Posterior vena cava (tissue), 2 donors: ENCODE measurements at regions of chr4 and their contacts with region 1.

Region 1: GRCh38 chr4:76748649-76749048 is 149.3 kb downstream of the SOWAHB start:
- DNase-seq: no peak

Region 2: GRCh38 chr4:75327804-75328512 is 1420.7 kb before region 1 on chr4:
- intact Hi-C with region 1: no loop called
- DNase-seq: peak; percentile 82

Region 3: DNA sequence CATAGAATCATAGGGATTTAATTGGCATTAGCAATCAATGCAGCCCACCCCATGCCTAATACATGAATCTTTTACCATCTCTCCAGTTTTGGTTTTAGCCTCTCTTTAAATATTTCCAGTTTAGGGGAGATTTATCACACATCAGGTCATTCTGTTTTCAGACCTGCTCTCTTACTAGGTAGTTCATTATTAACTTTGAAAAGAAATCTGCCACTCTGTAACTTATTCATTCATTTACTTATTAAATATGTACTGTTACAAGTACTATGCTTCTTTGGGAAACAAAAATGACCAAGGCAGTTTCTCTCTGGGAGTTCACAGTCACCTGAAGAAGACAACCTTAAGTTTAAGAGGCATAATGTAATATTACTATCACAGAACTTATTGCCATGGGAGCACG is 962.1 kb before region 1 on chr4:
- intact Hi-C with region 1: no loop called
- DNase-seq: no peak

Region 4: DNA sequence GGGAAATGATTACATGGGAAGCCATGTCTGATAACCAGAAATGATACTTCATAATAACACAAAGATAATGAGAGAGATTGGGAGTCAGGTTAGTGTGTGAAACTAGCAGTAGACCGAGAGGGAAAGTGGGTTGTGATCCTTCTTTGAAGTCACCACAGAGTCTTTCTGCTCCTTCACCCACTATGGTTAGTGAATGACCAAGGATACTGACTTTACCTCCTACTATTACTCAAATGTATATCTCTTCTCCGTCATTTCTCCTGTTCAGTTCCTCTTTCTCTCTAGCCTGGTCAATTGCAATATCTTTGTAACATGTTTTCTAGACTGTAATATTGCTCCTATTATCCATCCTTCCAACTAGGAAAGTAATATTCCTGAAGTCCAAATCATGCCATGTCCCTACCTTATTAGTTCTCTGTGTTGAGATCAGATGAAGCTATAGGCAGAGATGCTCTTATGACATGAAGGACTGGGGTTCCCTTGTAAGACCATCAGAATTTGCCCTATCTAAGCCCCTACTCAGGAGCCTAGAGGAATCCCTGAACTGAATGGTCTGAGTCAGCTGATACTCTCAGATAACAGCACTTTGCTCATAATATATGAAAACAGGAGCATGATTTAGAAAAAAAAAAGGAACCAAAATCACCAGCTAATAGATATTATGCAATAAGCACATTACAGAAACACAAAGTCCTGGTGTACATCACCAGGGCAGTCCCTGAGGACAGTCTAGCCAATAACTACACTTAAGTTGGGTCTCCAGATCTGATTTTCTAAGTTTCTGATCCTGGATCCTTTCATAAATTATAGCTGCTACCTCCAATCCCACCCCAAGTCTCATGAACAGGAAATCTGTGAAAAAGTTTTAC is 232.4 kb before region 1 on chr4:
- intact Hi-C with region 1: loop called (anchors 10 kb)
- DNase-seq: no peak

Region 5: DNA sequence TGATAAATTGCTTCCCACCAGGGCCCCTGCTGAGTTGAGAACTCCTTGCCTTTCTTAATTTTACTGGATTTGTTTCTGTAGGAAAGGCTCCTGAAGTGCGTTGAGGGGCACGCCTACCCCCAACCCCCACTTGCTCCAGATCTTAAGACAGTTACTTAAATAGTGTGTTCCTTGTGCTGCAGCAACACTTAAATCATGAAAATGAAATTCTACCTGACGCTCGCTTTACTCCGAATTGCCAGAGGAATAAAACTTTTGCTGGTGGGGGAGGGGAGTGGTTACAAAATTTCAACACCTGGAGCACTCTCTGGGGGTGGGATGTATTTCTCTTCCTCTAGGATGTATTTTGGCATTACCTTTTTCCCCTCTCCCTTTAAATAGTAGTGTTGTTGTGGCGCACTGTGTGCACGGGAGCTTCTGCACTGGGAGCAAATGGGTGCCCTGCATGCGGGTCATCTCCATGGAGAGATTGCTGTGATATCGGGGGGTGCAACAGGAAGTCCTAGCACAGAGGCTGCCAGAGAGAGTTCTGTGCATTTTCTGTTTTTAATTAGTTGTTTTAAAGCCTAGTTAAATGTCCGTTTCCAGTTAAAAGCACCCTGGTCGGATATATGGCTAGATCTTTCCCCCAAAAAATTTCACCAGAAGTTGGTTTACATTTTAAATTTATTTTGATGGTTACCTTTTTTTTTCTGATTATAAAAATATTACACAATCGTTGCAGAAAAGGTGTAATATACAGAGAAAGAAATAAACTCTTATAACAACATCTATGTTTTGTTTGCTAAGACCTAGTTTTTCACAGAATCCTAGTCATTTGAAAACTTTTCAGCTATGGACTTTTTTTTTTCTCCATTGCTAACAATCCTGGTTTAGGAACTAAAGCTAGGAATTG is 58.4 kb before region 1 on chr4:
- intact Hi-C with region 1: loop called in 1 of 2 experiments (anchors 5 kb)
- DNase-seq: no peak

Region 6: DNA sequence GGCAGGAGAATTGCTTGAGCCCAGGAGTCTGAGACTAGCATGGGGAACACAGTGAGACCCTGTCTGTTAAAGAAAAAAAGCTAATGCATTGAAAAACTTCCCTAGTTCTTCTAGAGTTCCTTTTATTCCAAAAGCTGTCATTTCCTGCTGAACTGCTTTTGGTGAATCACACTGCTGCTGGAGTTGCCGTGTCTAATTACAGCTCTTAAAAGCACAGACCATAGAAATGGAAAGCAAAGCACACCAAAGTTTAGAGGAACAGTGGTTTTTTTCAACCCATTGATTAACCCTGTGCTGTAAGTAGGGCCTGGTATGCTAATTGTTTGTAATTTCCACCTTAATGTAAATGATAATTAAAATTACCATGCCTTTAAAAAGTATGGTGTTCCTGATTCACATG is 253.3 kb after region 1 on chr4:
- intact Hi-C with region 1: no loop called
- DNase-seq: no peak